Natural killer cell (primary cell): ENCODE measurements at regions of chr1 and their contacts with region 1.

Region 1: DNA sequence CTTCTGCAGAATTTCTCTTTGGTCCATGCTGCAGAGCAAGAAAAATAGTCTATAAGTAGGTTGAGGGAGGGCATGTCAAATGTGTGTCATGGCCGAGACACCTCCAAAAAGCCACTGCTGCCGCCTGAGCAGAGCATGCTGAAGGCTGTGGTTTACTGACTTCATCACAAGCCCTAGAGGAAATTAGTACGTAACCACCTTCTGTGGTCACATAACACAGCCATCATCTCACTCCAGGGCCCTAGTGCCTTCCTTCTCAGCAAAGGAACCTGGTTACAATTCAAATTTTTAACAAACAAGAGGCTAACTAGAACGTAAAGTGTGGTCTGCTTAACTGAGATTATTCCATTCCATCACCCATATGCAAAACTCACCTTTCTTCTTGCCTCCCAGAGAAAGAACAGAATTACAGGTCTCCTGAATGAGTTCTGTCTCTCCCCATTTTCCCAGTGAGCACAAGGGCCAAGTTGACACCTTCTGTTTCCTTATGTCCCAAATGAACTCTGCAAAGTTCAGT is at the start of gene PTPN22:
- DNase-seq: peak; percentile 75 to 94
- ATAC-seq: peak; percentile 75 to 93 (median 92)
- H3K4me3 ChIP-seq: peak within 1 kb of the TSS; percentile 70
- H3K4me3 Mint-ChIP-seq: peak within 1 kb of the TSS; percentile 94
- H3K27ac ChIP-seq: peak within 1 kb of the TSS; percentile 92
- H3K27ac Mint-ChIP-seq: peak within 1 kb of the TSS; percentile 87 to 95
- H3K4me1 ChIP-seq: peaks cover 49% of the 10 kb centered on the region
- H3K4me1 Mint-ChIP-seq: peaks cover 78 to 85% of the 10 kb centered on the region in 2 donors
- H3K27me3 ChIP-seq: no peaks in the 10 kb centered on the region
- H3K27me3 Mint-ChIP-seq: no peaks in the 10 kb centered on the region
- CTCF ChIP-seq: no peak
- total RNA-seq, gene PTPN22: 98.4 to 122 (median 104) TPM

Region 2: GRCh38 chr1:113811888-113812660 is 59.6 kb before region 1 on chr1 and contains the start of gene RSBN1:
- intact Hi-C with region 1: loop called (anchors 1 kb)
- DNase-seq: peak; percentile 94 to 98
- ATAC-seq: peak; percentile 84 to 97 (median 88)
- H3K4me3 ChIP-seq: peak within 1 kb of the TSS; percentile 85
- H3K4me3 Mint-ChIP-seq: peak within 1 kb of the TSS; percentile 98
- H3K27ac ChIP-seq: peak within 1 kb of the TSS; percentile 97
- H3K27ac Mint-ChIP-seq: peak within 1 kb of the TSS; percentile 95
- H3K4me1 ChIP-seq: peaks cover 8% of the 10 kb centered on the region
- H3K4me1 Mint-ChIP-seq: peaks cover 37 to 38% of the 10 kb centered on the region in 2 donors
- H3K27me3 ChIP-seq: no peaks in the 10 kb centered on the region
- H3K27me3 Mint-ChIP-seq: no peaks in the 10 kb centered on the region
- CTCF ChIP-seq: no peak
- total RNA-seq, gene RSBN1: 30.1 to 37.9 (median 36.5) TPM

Region 3: GRCh38 chr1:113835642-113836307 is 35.9 kb before region 1 on chr1:
- intact Hi-C with region 1: loop called (anchors 5 kb)
- DNase-seq: peak in 1 of 2 donors; percentile 83
- ATAC-seq: peak in 2 of 3 donors; percentile 53 to 67
- H3K4me3 ChIP-seq: no peak overlapping the region
- H3K4me3 Mint-ChIP-seq: no peak overlapping the region
- H3K27ac ChIP-seq: no peak overlapping the region
- H3K27ac Mint-ChIP-seq: peak overlapping the region in 1 of 2 donors; percentile 66
- H3K4me1 ChIP-seq: no peaks in the 10 kb centered on the region
- H3K4me1 Mint-ChIP-seq: no peaks in the 10 kb centered on the region
- H3K27me3 ChIP-seq: no peaks in the 10 kb centered on the region
- H3K27me3 Mint-ChIP-seq: no peaks in the 10 kb centered on the region
- CTCF ChIP-seq: peak; percentile 74

Region 4: DNA sequence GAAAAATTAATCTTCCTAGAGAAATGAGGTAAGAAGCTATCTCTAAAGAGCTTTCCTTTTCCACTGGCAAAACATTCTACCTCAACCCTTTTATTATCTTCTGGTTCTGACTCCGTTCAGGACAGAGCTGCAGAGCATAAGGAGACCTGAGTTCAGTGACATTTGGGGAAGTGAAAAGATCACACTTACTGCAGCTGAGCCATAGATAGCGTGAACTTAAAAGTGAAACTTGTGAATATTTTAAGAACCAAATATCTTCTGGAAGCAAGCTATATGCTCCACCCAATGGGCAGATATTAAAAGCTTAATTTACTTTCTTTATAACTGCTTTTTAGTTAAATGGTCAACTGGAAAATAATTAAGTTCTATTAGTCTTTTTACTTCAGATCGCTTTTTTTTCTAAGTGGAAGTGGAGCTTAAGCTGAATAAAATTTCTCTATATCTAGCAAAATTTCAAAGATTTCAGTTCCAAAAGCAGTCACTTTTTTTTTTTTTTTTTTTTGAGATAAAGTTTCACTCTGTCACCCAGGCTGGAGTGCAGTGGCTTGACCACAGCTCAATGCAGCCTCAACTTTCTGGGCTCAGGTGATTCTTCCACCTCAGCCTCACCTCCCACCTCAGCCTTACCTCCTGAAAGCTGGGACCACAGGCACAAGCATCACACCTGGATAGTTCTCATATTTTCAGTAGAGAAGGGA is 12.0 kb before region 1 on chr1:
- intact Hi-C with region 1: loop called (anchors 1 kb)
- DNase-seq: peak in 1 of 2 donors; percentile 47
- ATAC-seq: peak; percentile 86 to 88 (median 88)
- H3K4me3 ChIP-seq: peak overlapping the region; percentile 4
- H3K4me3 Mint-ChIP-seq: peak overlapping the region; percentile 65
- H3K27ac ChIP-seq: peak overlapping the region; percentile 66
- H3K27ac Mint-ChIP-seq: peak overlapping the region; percentile 76 to 89
- H3K4me1 ChIP-seq: peaks cover 21% of the 10 kb centered on the region
- H3K4me1 Mint-ChIP-seq: peaks cover 57 to 62% of the 10 kb centered on the region in 2 donors
- H3K27me3 ChIP-seq: no peaks in the 10 kb centered on the region
- H3K27me3 Mint-ChIP-seq: no peaks in the 10 kb centered on the region
- CTCF ChIP-seq: no peak